Activated CD8-positive, alpha-beta memory T cell treated with anti-CD3 and anti-CD28 coated beads, Interleukin-2, amount 10 ng/mL, durations not matched to agents 7 days and 5 days (primary cell): ENCODE measurements at regions of chr1 and their contacts with region 1.

Region 1: DNA sequence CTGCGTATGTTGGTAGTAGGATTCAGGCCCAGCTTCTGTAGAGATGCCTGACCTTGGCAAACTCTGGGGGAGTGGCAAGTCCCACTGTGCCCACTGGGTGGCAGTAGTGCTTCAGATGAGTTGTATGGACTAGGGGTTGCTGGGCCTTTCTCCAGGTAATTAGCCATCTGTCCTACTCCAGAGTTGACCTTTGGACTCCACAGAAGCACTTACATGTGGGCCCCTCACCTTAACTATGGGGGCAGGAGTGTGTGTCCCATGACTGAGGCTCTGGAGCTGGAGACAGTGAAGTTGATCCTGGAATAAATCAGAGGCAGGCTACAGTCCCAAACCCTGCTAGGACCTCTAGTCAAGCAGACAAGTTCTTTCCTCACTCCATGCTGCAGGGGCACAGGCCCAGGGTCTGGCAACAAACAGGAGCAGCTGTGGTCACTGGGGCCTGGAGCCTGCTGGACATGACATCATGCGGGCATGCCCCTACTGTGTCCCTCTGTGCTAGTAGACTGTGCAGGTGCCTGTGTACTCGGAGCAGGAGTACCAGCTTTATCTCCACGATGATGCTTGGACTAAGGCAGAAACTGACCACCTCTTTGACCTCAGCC is 4.6 kb downstream of the DMAP1 start:
- DNase-seq: peak; percentile 83
- ATAC-seq: peak; percentile 35
- H3K4me3 Mint-ChIP-seq: no peak overlapping the region
- H3K27ac Mint-ChIP-seq: no peak overlapping the region
- H3K4me1 Mint-ChIP-seq: peaks cover 30% of the 10 kb centered on the region
- H3K27me3 Mint-ChIP-seq: no peaks in the 10 kb centered on the region

Region 2: GRCh38 chr1:43979528-43980254 is 238.2 kb before region 1 on chr1:
- CTCF ChIA-PET with region 1: no interaction called
- DNase-seq: peak; percentile 59
- ATAC-seq: peak; percentile 28
- H3K4me3 Mint-ChIP-seq: peak overlapping the region; percentile 81
- H3K27ac Mint-ChIP-seq: peak overlapping the region; percentile 77
- H3K4me1 Mint-ChIP-seq: peaks cover 42% of the 10 kb centered on the region
- H3K27me3 Mint-ChIP-seq: no peaks in the 10 kb centered on the region

Region 3: GRCh38 chr1:44068442-44068921 is 149.4 kb before region 1 on chr1:
- CTCF ChIA-PET with region 1: no interaction called
- DNase-seq: no peak
- ATAC-seq: no peak
- H3K4me3 Mint-ChIP-seq: no peak overlapping the region
- H3K27ac Mint-ChIP-seq: no peak overlapping the region
- H3K4me1 Mint-ChIP-seq: peaks cover 6% of the 10 kb centered on the region
- H3K27me3 Mint-ChIP-seq: peaks cover 28% of the 10 kb centered on the region

Region 4: DNA sequence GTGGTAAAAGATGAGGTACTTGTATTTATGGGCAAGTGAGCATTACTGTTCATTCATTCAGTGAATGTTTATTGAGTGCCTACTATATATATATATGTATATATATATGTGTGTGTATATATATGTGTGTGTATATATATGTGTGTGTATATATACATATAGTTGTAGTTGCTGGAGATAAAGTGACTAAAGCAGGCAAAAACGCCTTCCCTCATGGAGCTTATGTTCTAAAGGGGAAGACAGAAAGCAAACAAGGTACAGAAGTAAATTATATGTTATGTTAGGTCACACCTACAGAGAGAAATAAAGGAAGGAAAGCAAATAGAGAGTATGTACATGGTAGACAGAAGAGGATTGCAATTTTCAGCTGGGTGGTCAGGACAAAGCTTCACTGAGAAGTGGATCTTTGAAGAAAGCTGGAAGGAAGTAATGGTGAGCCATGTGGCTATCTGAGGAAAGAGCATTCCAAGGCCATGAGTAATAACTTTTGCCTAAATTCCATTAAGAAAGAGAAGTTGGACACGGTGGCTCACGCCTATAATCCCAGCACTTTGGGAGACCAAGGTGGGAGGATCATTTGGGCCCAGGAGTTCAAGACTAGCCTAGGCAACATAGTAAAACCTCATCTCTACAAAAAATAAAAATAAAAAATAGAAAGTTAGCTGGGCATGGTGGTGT is 132.8 kb before region 1 on chr1:
- CTCF ChIA-PET with region 1: no interaction called
- DNase-seq: no peak
- ATAC-seq: no peak
- H3K4me3 Mint-ChIP-seq: no peak overlapping the region
- H3K27ac Mint-ChIP-seq: no peak overlapping the region
- H3K4me1 Mint-ChIP-seq: no peaks in the 10 kb centered on the region
- H3K27me3 Mint-ChIP-seq: peaks cover 35% of the 10 kb centered on the region

Region 5: DNA sequence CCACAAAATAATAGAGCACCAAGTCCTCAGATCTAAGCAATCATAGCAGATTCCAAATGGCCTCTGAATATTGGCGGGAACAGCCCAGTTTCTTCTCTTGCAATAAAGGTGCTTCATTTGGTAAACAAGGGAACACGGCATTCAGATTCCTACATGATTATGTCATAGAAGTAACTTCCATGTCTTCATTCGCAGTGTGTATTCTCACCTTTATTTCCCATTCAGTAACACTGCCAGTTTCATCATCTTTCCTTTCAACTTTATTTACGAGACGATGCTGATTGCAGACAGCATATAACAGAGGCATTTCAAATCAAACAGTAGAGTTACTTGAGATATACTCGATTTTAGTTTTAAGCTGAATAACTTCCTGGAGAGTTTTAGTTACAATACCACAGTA is 63.2 kb before region 1 on chr1:
- CTCF ChIA-PET with region 1: no interaction called
- DNase-seq: no peak
- ATAC-seq: no peak
- H3K4me3 Mint-ChIP-seq: no peak overlapping the region
- H3K27ac Mint-ChIP-seq: no peak overlapping the region
- H3K4me1 Mint-ChIP-seq: no peaks in the 10 kb centered on the region
- H3K27me3 Mint-ChIP-seq: peaks cover 26% of the 10 kb centered on the region

Region 6: DNA sequence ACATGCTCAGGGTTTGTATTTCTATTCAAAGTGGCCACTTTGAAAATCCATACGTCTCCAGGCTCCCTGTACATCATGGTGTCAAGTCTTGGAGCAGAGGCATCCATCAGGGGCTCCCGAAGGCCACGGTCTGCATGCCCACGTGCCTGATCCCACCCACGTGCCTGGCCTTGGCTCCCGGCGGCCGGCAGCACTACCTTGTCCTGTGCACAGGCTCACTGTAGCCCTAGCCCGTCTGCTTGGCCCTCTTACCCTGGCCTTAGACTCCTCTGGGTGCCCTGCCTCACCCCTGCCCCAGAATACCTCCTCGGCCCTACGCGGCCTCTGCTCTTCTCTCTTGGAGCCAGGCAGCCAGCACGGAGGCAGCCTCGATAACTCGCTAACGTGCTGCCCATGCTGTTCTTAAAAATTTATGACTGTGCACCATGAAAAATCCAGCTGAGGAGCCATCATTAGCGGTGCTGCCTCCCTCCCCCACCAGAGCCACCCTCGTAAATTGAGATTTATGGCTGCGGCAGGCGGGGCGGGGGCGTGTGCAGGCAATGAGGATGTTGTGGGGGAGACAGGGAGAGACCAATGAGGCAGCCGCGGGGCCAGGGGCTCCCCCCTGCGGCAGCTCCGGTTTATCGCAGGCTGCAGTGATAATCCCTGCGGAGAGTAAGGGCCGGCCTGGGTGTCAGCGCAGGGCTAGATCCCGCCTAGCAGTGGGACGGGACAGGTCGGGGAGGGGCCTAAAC is 20.0 kb after region 1 on chr1:
- CTCF ChIA-PET with region 1: interaction called, 12 read pairs
- DNase-seq: peak; percentile 50
- ATAC-seq: peak; percentile 73
- H3K4me3 Mint-ChIP-seq: no peak overlapping the region
- H3K27ac Mint-ChIP-seq: no peak overlapping the region
- H3K4me1 Mint-ChIP-seq: peaks cover 2% of the 10 kb centered on the region
- H3K27me3 Mint-ChIP-seq: no peaks in the 10 kb centered on the region

Region 7: GRCh38 chr1:44318097-44319088 is 100.5 kb after region 1 on chr1:
- CTCF ChIA-PET with region 1: interaction called, 19 read pairs
- DNase-seq: peak; percentile 46
- ATAC-seq: no peak
- H3K4me3 Mint-ChIP-seq: no peak overlapping the region
- H3K27ac Mint-ChIP-seq: no peak overlapping the region
- H3K4me1 Mint-ChIP-seq: peaks cover 11% of the 10 kb centered on the region
- H3K27me3 Mint-ChIP-seq: no peaks in the 10 kb centered on the region